Activated B cell treated with CpG ODN at 0.5 μM for 24 hours (primary cell): ENCODE measurements at regions of chr1 and their contacts with region 1.

Region 1: DNA sequence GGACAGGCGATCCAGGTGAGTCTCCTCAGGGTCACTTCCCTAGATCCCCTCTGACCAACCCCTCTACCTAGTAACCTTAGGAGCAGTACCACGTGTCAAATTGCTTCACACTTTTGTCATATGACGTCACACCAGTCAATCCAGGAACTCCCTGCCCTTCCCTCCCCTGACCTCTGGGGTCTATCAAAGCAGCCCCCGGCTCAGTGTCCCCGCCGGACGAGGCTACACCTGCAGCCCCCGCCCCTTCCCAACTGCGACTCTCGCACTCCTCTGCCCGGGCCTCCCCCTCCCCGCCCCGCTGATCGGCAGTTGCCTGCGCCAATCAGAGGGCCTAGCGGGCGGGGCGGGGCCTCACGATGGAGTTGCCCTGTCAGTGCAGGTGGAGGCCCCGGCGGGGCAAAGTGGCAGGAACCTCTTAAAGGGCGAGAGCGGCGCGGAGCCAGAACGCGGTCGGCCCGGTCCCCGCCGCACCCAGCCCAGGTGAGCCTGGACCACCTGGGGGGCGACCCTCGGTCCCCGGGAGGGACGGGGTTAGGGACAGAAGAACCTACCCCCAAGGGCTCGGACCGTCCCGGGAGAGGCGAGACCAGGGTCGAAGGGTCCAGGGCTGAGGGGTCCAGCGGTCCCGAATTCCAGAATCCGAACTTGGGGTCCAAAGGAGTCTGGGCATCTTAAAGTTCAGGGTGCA is 27.5 kb upstream of the EPB41 start:
- DNase-seq: peak; percentile 94
- ATAC-seq: peak; percentile 75
- H3K4me3 Mint-ChIP-seq: peak overlapping the region; percentile 88
- H3K27ac Mint-ChIP-seq: peak overlapping the region; percentile 91
- H3K4me1 Mint-ChIP-seq: peaks cover 58% of the 10 kb centered on the region
- H3K27me3 Mint-ChIP-seq: no peaks in the 10 kb centered on the region
- CTCF ChIP-seq: no peak

Region 2: DNA sequence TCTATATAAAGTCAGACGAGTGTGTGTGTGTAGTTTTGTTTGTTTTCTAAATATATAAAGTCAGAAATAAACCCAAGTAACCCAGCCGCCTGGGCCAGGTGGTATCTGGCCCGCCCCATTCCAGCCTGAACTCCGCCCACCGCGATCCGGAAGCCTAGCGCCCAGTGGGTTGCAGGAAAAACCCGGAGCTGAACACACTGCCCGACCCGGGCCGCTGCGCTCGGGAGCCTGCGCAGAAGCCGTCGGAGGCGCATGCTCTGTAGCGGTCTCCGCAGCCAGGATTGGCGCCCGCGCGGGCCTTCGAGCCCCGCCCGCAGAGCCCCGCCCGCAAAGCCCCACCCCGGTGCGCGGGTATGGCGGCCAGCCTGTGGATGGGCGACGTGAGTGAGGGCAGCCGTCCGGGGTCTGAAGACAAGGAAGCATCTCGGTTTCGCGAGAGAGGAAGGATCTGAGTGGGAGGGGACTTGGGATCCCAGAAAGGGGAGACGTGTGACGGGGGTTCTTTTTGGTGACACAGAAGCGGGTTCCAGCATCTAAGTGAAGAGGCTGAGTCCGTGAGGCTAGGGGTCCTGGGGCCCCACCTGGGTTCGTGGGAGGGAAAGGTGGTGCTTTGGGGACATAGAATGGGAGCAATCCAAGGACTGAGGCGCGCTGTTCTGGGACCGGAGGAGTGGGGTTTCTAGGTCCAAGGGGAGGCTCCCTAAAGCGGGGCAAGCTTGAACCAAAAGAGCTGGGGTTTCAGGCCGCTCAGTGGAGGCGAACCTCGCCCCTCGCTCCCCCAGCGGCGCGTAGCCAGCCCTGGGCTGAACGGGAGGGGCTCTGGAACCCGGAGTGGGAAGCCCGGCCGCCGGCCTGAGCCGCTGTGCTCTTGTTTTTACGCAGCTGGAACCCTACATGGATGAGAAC is 333.9 kb before region 1 on chr1 and contains the start of gene TRNAU1AP:
- CTCF ChIA-PET with region 1: no interaction called
- POLR2A ChIA-PET with region 1: interaction called, 4 read pairs
- intact Hi-C with region 1: loop called (anchors 1 kb)
- DNase-seq: peak; percentile 94
- ATAC-seq: peak; percentile 93
- H3K4me3 Mint-ChIP-seq: peak within 1 kb of the TSS; percentile 99
- H3K27ac Mint-ChIP-seq: peak within 1 kb of the TSS; percentile 98
- H3K4me1 Mint-ChIP-seq: peaks cover 26% of the 10 kb centered on the region
- H3K27me3 Mint-ChIP-seq: no peaks in the 10 kb centered on the region
- CTCF ChIP-seq: no peak
- total RNA-seq, gene TRNAU1AP: 36.9 and 42.0 TPM in 2 replicates

Region 3: GRCh38 chr1:28835237-28835650 is 51.6 kb before region 1 on chr1:
- CTCF ChIA-PET with region 1: no interaction called
- POLR2A ChIA-PET with region 1: no interaction called
- intact Hi-C with region 1: no loop called
- DNase-seq: no peak
- ATAC-seq: no peak
- H3K4me3 Mint-ChIP-seq: no peak overlapping the region
- H3K27ac Mint-ChIP-seq: no peak overlapping the region
- H3K4me1 Mint-ChIP-seq: no peaks in the 10 kb centered on the region
- H3K27me3 Mint-ChIP-seq: peaks cover 5% of the 10 kb centered on the region
- CTCF ChIP-seq: no peak

Region 4: DNA sequence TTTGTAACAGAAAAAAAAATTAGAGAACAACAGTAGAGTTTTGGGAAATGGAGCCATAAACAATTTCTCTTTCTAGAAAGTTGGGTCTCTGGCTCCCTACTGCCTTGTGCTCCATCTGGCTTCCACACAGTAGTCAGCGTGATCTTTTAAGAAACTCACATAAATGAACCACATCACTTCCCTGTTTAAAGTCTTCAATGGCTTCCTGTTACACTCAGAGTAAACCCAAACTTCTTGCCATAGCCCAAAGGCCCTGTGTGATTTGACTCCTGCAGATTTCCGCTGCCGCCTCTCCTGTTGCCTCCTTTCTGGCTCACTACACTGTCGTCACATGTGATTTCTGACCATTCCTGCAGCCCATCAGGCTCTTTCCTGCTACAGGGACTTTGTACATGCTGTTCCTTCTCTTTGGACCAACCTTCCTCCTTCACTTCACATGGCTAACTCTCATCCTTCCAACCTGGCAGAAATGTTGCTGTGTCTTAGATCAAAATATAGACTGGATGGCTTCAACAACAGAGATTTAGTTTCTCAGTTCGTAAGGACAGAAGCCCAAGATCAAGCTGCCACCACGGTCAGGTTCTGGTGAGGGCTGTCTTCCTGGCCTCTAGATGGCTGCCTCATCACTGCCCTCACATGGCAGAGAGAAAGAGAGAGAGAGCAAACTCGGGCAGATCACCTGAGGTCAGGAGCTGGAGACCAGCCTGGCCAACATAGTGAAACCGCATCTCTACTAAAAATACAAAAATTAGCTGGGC is 40.9 kb before region 1 on chr1:
- CTCF ChIA-PET with region 1: no interaction called
- POLR2A ChIA-PET with region 1: no interaction called
- intact Hi-C with region 1: no loop called
- DNase-seq: no peak
- ATAC-seq: no peak
- H3K4me3 Mint-ChIP-seq: no peak overlapping the region
- H3K27ac Mint-ChIP-seq: no peak overlapping the region
- H3K4me1 Mint-ChIP-seq: peaks cover 5% of the 10 kb centered on the region
- H3K27me3 Mint-ChIP-seq: peaks cover 4% of the 10 kb centered on the region
- CTCF ChIP-seq: no peak

Region 5: DNA sequence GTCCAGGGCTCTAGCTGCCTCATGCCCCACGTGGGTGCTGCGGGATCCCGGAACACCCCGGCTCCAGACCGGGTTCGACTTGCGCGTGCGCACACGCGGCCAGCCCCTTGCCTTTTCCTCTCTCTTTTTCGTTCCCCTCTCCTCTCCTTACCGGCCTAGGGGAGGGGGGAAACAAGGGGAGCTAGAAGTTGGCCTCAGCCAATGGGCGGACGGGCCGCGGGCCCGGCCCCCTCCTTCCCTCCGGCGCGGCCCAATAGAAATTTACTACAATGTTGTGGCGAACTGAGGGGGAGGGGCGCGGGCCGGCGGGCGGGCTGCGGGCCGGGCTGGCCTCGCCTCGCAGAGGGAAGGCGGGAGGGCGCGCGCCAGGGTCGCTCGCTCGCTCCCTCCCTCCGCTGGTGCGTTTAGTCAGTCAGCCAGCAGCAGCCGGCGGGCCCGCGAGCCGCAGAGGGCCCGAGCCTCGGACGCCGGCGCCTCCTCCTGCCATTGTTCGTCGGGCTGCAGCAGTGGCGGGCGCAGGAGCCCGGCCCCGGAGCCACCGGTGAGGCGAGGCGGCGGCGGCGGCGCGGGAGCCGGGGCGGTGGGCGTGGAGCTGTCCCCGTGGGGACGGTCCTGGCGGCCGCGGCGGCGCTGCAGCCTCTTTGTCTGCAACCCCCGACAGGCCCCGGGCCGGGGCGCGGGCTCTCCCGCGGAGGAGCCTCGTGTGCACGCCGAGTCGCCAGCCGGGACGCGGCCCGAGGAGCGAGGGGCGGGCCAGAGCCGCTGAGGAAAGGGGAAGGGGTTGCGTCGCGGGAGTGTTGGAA is 27.6 kb after region 1 on chr1 and contains the start of gene EPB41:
- CTCF ChIA-PET with region 1: interaction called, 9 read pairs
- POLR2A ChIA-PET with region 1: interaction called, 45 read pairs
- intact Hi-C with region 1: loop called (anchors 1 kb)
- DNase-seq: peak; percentile 86
- ATAC-seq: peak; percentile 93
- H3K4me3 Mint-ChIP-seq: peak within 1 kb of the TSS; percentile 97
- H3K27ac Mint-ChIP-seq: peak within 1 kb of the TSS; percentile 92
- H3K4me1 Mint-ChIP-seq: peaks cover 46% of the 10 kb centered on the region
- H3K27me3 Mint-ChIP-seq: no peaks in the 10 kb centered on the region
- CTCF ChIP-seq: no peak
- total RNA-seq, gene EPB41: 73.8 and 74.0 TPM in 2 replicates

Region 6: DNA sequence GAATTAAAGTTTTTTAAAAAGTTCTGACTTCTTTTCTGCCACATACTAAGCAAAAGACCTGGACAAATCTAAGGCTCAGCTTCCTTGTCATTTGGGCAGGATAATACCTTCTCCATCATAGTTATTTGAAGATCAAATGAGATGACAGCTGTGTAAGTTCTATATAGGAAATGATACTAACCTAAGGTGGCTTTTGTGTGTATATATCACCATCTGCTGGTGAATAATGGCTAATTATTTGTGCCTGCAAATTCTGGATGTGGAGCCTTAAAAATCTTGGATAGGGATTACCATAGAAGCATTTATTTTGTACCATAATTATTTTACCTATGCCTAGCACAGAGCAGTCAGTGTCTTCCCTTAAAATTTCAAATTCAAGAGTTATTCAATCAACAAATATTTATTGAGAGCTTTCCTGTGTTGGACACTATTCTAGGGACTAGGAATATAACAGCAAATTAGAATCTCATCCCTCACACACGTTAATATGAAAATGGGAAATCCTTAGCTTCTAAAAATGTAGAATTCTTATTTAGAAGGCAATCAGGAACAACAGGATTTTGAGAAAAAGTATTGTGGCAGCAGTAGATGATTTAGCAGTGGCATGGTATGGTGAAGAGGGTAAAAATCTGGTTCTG is 147.1 kb after region 1 on chr1:
- CTCF ChIA-PET with region 1: interaction called, 421 read pairs
- POLR2A ChIA-PET with region 1: interaction called, 11 read pairs
- intact Hi-C with region 1: loop called (anchors 1 kb)
- DNase-seq: no peak
- ATAC-seq: peak; percentile 34
- H3K4me3 Mint-ChIP-seq: no peak overlapping the region
- H3K27ac Mint-ChIP-seq: no peak overlapping the region
- H3K4me1 Mint-ChIP-seq: no peaks in the 10 kb centered on the region
- H3K27me3 Mint-ChIP-seq: no peaks in the 10 kb centered on the region
- CTCF ChIP-seq: no peak

Region 7: GRCh38 chr1:29197585-29197924 is 310.7 kb after region 1 on chr1:
- CTCF ChIA-PET with region 1: interaction called, 40 read pairs
- POLR2A ChIA-PET with region 1: interaction called, 4 read pairs
- intact Hi-C with region 1: loop called (anchors 1 kb)
- DNase-seq: no peak
- ATAC-seq: peak; percentile 90
- H3K4me3 Mint-ChIP-seq: no peak overlapping the region
- H3K27ac Mint-ChIP-seq: no peak overlapping the region
- H3K4me1 Mint-ChIP-seq: peaks cover under 1% of the 10 kb centered on the region
- H3K27me3 Mint-ChIP-seq: no peaks in the 10 kb centered on the region
- CTCF ChIP-seq: no peak

Region 8: DNA sequence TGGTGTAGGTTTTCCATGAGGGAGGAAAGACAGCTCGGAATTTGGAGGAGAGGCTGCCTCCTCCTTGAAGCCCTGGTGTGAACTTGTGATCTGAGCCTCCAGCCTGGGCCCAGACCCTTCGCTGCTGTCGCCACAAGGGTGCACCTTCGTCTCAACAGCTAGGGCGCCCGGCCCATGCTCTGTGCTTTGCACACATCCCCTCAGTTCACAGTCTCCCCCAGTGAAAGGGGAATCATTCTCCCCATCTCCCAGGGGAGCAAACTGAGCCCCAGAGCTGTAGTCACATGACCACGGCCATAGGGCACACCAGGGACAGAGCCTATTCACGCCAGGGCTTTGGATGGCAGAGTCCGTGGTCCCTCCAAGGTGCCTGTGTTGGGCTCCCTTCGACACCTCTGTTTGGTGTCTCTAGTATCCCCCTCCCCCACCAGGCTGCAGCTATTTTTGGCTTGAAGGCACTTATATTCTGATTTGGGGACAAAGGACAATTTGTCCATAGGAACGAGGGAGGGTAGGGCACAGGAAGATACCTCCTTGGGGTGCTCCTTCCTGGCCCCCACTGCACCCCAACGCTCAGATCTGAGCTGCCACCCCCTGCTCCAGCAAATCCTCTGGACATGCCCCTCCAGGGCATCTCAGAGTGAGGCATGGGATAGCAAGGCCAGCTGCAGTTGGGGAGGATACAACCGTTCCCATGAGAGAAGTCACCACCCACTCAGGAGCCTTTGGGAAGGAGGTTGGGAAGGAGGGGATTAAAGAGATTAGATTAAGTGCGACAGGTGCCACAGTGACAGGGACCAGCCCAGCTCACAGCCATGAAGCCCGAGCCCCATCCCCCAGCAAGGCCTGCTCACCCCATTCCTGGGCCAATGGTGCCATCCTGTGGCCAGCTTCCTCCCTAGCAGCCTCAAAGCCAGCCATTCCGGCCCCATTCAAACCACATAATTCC is 1820.8 kb after region 1 on chr1:
- CTCF ChIA-PET with region 1: interaction called, 3 read pairs
- POLR2A ChIA-PET with region 1: no interaction called
- intact Hi-C with region 1: loop called (anchors 2 kb)
- DNase-seq: peak; percentile 62
- ATAC-seq: peak; percentile 98
- H3K4me3 Mint-ChIP-seq: no peak overlapping the region
- H3K27ac Mint-ChIP-seq: no peak overlapping the region
- H3K4me1 Mint-ChIP-seq: peaks cover 4% of the 10 kb centered on the region
- H3K27me3 Mint-ChIP-seq: peaks cover 26% of the 10 kb centered on the region
- CTCF ChIP-seq: no peak